Colonic mucosa (tissue), 4 donors: ENCODE measurements at regions of chr10 and their contacts with region 1.

Region 1: DNA sequence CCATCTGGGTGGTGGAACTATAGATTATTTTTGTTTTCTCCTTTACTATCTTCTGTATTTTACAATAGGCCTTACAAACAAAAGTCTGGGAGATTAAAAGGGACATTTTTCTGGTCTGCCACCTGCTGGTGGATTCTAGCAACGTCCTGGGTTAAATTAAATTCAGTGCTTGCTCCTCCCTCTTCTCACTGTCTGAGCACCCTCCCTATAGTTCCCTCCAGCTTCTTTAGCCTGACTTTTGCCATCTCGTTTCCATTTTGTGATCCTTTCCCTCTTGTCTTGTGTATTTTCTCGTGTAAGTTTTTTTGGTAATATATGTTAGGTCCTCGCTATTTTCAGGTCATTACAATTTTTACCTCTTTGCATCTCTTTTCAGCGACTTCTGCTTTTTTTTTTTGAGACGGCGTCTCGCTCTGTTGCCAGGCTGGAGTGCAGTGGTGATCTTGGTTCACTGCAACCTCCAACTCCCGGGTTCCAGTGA is 16.1 kb downstream of the ANKRD16 start:
- DNase-seq: peak; percentile 81
- H3K4me3 ChIP-seq: no peak overlapping the region
- H3K27ac ChIP-seq: no peak overlapping the region
- H3K4me1 ChIP-seq: no peaks in the 10 kb centered on the region
- H3K27me3 ChIP-seq: no peaks in the 10 kb centered on the region
- CTCF ChIP-seq: peak; percentile 63

Region 2: DNA sequence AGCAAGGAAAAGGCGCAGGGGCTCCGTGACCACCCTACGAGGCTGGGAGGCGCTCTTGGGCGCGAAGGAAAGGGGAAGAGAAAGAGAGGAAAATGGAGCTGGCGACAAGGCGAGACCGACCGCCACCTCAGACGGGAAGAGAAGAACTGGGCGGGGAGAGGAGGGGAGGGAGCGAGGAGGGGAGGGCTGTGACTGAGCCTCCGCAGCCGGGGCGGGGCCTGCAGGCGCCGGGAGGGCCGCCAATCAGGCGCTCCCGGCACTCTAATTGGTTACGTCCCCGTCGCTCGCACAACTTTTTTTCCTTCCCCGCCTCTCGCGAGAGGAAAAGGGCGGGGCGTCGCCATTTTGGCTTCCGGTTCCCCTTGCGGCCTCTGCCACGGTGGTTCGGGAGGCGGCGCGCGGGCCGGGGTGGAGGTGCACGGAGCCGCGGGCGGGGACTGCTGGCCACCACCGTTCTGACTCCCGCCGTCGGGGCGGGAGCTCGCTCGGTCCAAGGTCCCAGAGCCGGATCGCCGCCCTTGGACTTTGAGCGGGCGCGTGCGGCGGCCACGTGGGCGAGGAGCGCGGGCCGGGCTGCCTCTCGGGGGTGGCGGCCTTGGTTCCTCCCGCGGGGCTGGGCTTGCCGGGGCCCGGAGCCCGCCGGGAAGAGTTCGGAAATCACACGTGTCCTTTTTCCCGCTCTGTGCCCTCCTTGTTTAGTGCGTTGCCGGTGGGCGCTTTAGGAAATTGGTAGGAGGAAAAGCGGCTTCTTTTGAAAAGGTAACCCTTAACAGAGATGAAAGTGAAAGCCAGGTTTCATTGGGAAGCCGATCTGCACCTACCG is 60.1 kb before region 1 on chr10 and contains the start of gene GDI2:
- intact Hi-C with region 1: loop called (anchors 10 kb)
- DNase-seq: peak; percentile 98
- H3K4me3 ChIP-seq: peak within 1 kb of the TSS; percentile 78
- H3K27ac ChIP-seq: peak within 1 kb of the TSS; percentile 98
- H3K4me1 ChIP-seq: no peaks in the 10 kb centered on the region
- H3K27me3 ChIP-seq: no peaks in the 10 kb centered on the region
- CTCF ChIP-seq: no peak
- total RNA-seq, gene GDI2: 243 to 266 TPM